H1 (cell line): ENCODE measurements at regions of chr4 and their contacts with region 1.

Region 1: DNA sequence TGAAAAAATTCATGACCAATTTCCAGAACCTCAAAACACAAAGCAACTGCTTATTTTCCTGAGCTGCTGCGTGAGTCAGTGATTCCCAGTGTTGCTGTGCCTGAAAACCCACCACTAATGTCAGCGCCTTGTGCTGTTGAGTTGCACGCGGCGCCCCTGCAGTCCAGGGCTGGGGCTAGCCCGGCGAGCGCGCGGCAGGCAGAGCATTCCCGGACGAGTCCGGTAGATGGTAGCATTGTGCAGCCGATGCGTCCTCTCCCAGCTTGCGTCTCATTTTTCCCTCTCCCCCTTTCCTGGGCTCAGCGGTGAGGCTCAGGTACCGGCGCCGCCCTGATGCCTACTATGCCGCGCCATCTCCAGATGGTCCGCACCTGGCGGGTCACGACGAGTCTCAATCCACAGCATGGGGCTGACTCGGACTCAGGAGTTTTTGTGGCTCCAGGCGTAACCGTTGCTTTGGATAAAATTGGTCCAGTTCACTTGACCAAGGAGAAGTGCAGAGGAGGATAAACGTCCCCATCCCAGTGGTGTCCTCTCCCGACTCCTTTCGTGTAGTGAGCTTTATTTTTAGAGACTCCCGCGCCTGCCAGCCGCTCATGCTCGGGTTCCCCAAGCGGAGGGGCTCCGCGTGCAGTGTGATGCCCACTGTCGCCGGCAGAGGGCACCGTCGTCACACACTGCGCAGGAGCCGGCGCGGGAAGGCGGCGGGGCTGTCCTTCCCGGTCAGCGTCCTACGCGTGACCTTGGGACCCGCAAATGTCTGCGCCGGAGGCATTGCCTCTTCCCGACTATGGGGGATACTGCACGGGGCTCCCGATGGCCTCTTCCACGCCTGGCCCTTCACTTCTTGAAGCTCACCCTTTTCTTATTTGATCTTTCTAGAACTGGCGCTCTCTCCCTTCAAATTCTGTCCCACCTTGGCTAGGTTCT is 53.6 kb upstream of the IGFBP7 start:
- DNase-seq: peak; percentile 83 to 95
- H3K4me3 ChIP-seq: peak overlapping the region; percentile 33 to 64 (median 60); a peak in 7 of 8 replicates
- H3K27ac ChIP-seq: no peak overlapping the region; the same call in 1 of the 2 replicates
- H3K4me1 ChIP-seq: peaks cover 0 to 3% (median 1%) of the 10 kb centered on the region in 4 experiments; a peak in 2 of 7 replicates
- H3K27me3 ChIP-seq: peaks cover 0 to 10% (median 9%) of the 10 kb centered on the region in 4 experiments; a peak in 4 of 7 replicates
- CTCF ChIP-seq: peak; percentile 95 to 97 (median 96)
- EP300 ChIP-seq: no peak
- POLR2A ChIP-seq: no peak
- RAD21 ChIP-seq: peak; percentile 97 to 98

Region 2: GRCh38 chr4:57037982-57038604 is 125.7 kb before region 1 on chr4:
- CTCF ChIA-PET with region 1: interaction called, 87 read pairs
- POLR2A ChIA-PET with region 1: interaction called, 4 read pairs
- DNase-seq: peak; percentile 23 to 93
- H3K4me3 ChIP-seq: peak overlapping the region in 1 of 4 experiments; percentile 42; a peak in 1 of 8 replicates
- H3K27ac ChIP-seq: no peak overlapping the region
- H3K4me1 ChIP-seq: no peaks in the 10 kb centered on the region
- H3K27me3 ChIP-seq: no peaks in the 10 kb centered on the region
- CTCF ChIP-seq: peak; percentile 90 to 95 (median 95)
- EP300 ChIP-seq: no peak
- POLR2A ChIP-seq: no peak
- RAD21 ChIP-seq: peak; percentile 96 to 97

Region 3: DNA sequence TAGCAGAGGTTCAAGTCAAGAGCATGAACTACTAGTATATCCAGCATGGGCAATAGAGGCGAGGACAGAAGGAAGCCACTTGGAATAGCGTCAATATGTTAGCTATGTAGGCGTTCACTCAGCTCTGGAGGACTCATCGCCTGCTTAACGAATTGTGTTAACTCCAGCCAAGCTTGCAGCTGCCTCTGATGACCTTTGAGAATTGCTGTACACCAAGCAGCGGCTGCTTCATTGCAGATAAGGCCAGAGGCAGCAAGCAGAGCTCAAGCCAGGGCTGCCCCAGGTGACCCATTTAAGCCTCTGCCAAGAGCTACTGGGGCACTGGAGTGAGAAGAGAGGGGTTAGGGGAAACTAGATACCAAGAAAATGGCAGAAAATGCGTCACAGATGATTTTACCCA is 106.6 kb after region 1 on chr4:
- CTCF ChIA-PET with region 1: interaction called, 12 read pairs
- POLR2A ChIA-PET with region 1: no interaction called
- DNase-seq: no peak
- H3K4me3 ChIP-seq: no peak overlapping the region
- H3K27ac ChIP-seq: no peak overlapping the region
- H3K4me1 ChIP-seq: peaks cover 0 to 6% (median under 1%) of the 10 kb centered on the region in 4 experiments; a peak in 1 of 7 replicates
- H3K27me3 ChIP-seq: no peaks in the 10 kb centered on the region
- CTCF ChIP-seq: no peak
- EP300 ChIP-seq: no peak
- POLR2A ChIP-seq: no peak
- RAD21 ChIP-seq: no peak

Region 4: DNA sequence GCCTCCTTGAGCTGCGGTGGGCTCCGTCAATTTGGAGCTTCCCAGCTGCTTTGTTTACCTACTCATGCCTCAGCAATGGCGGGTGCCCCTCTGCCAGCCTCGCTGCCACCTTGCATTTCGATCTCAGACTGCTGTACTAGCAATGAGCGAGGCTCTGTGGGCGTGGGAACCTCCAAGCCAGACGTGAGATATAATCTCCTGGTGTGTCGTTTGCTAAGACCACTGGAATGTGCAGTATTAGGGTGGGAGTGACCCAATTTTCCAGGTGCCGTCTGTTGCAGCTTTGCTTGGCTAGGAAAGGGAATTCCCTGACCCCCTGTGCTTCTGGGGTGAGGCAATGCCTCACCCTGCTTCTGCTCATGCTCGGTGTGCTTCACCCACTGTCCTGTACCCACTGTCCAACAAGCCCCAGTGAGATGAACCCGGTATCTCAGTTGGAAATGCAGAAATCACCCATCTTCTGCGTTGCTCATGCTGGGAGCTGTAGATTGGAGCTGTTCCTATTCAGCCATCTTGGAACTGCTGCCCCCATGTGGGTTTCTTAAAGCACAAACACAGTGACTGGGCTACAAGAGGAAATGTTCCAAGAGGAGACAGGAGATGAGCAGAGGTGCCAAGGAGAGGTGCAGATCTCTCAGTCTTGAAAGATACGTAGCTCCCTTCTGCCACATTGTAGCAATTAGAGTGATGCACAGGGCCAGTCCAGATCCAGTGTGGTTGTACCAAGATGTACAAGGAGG is 139.4 kb after region 1 on chr4:
- CTCF ChIA-PET with region 1: interaction called, 22 read pairs
- POLR2A ChIA-PET with region 1: no interaction called
- DNase-seq: no peak
- H3K4me3 ChIP-seq: no peak overlapping the region
- H3K27ac ChIP-seq: no peak overlapping the region
- H3K4me1 ChIP-seq: no peaks in the 10 kb centered on the region
- H3K27me3 ChIP-seq: no peaks in the 10 kb centered on the region
- CTCF ChIP-seq: peak in 2 of 3 experiments; percentile 7 to 18; a peak in 1 of 4 replicates
- EP300 ChIP-seq: no peak
- POLR2A ChIP-seq: no peak
- RAD21 ChIP-seq: peak; percentile 20 to 41; a peak in 3 of 4 replicates

Region 5: DNA sequence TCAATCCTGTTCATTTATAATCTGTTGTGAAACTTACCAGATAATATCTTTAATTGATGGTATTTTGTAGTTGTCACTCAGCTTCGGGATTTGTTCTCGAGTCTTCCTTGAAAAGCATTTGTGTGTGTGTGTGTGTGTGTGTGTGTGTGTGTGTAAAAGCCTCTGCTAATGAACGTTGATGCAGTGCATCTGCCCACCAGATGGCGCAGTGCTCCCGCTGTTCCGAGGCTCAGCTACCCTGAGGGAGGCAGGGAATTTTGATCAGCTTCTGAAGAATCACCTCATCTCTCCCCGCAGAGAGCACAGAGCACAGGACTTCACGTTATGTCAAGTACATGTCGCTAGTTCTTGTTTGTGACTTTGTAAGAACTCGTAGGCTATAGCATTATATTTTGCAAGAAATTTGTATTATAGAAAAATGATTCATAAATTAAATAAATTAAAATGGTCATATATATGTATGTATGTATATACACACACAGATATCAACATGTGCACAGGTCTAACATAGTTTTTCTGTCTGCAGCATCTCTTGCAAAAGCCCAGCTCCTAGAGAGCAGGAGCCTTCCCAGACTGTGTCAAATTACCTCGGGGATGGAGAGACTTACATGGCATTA is 263.1 kb after region 1 on chr4:
- CTCF ChIA-PET with region 1: interaction called, 96 read pairs
- POLR2A ChIA-PET with region 1: no interaction called
- DNase-seq: peak; percentile 66 to 81
- H3K4me3 ChIP-seq: no peak overlapping the region
- H3K27ac ChIP-seq: no peak overlapping the region
- H3K4me1 ChIP-seq: no peaks in the 10 kb centered on the region
- H3K27me3 ChIP-seq: no peaks in the 10 kb centered on the region
- CTCF ChIP-seq: peak; percentile 71 to 92 (median 88)
- EP300 ChIP-seq: no peak
- POLR2A ChIP-seq: no peak
- RAD21 ChIP-seq: peak; percentile 94 to 95

Region 6: GRCh38 chr4:57460967-57461366 is 297.2 kb after region 1 on chr4:
- CTCF ChIA-PET with region 1: interaction called, 11 read pairs
- POLR2A ChIA-PET with region 1: no interaction called
- DNase-seq: no peak
- H3K4me3 ChIP-seq: no peak overlapping the region
- H3K27ac ChIP-seq: no peak overlapping the region
- H3K4me1 ChIP-seq: no peaks in the 10 kb centered on the region
- H3K27me3 ChIP-seq: no peaks in the 10 kb centered on the region
- CTCF ChIP-seq: no peak
- EP300 ChIP-seq: no peak
- POLR2A ChIP-seq: no peak
- RAD21 ChIP-seq: no peak